GM10248 (cell line): ENCODE measurements at regions of chr12 and their contacts with region 1.

Region 1: GRCh38 chr12:54749191-54749818 is 101.1 kb upstream of the DCD start:
- DNase-seq: peak; percentile 56
- CTCF ChIP-seq: peak; percentile 86

Region 2: GRCh38 chr12:54324617-54325441 is 424.5 kb before region 1 on chr12 and contains the start of gene COPZ1:
- CTCF ChIA-PET with region 1: no interaction called
- POLR2A ChIA-PET with region 1: no interaction called
- DNase-seq: peak; percentile 92
- CTCF ChIP-seq: peak; percentile 72

Region 3: GRCh38 chr12:54701940-54702592 is 47.2 kb before region 1 on chr12:
- CTCF ChIA-PET with region 1: interaction called, 13 read pairs
- POLR2A ChIA-PET with region 1: no interaction called
- DNase-seq: peak; percentile 42
- CTCF ChIP-seq: peak; percentile 51

Region 4: DNA sequence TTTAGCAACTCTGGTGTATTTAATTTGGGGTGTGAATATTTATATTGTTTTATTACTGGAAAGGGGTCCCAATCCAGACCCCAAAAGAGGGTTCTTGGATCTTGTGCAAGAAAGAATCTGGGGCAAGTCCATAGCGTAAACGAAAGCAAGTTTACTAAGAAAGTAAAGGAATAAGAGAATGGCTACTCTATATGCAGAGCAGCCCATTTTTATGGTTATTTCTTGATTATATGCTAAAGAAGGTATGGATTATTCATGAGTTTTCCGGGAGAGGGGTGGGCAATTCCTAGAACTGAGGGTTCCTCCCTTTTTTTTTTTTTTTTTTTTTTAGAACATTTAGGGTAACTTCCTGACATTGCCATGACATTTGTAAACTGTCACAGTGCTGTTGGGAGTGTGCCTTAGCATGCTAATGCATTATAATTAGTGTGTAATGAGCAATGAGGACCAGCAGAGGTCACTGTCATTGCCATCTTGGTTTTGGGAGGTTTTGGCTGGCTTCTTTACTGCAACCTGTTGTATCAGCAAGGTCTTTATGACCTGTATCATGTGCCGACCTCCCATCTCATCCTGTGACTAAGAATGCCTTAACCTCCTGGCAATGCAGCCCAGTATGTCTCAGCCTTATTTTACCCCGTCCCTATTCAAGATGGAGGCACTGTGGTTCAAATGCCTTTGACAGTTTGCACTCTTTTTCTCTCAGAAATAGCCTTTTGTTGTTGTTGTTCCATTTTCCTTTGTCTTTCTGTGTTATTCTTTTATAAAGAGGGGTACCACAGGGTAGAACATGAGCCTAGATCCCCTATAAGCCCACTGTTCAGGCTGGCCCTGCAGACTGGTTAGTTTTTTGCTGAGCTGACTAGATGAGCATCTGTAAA is 25.7 kb before region 1 on chr12:
- CTCF ChIA-PET with region 1: interaction called, 12 read pairs
- POLR2A ChIA-PET with region 1: no interaction called
- DNase-seq: no peak
- CTCF ChIP-seq: peak; percentile 48

Region 5: DNA sequence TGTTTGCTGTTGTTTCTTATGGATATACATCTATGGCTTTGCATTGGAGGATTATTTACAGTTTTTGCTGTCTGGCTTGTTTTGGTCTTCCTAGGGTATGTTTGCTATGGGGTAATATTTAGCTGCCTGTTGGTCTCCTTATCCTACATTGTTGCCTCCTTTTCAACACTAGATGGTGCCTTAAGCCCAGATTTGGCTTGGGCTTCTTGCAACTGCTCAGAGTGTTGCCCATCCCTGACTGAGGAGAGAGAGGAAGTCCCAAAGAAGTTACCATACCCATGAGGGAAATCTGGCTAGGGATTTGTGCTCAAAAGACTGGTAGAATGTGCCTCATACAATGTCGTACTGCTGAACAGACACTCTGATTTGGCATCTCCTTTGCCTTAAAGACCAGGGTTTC is 10.4 kb after region 1 on chr12:
- CTCF ChIA-PET with region 1: interaction called, 28 read pairs
- POLR2A ChIA-PET with region 1: no interaction called
- DNase-seq: peak; percentile 16
- CTCF ChIP-seq: peak; percentile 39

Region 6: DNA sequence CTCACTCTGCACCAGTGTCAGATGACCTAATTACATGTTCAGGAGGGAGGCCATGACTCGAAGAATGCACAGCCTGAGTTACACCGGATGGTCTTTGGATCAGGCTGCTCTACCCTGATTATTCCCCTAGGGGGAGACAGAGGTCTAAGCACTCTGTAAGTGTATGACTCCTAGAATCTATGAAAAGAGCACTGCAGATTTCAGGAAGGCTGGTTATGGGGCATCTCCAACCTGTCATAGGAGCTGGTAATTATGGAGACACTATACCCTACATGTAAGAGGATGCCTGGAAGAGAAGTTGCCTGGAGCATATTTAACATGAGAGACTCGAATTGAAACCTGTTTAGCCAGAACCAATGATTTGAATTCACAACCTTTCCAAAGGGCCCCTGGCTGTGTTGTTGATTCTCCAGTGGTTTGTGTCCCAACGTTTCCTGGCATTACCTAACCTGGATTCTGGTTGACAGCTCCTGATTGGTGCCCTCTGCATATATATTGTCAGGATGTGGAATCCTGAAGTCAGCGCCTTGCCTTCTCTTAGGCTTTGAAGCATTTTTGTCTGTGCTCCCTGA is 104.8 kb after region 1 on chr12 and contains the start of gene MUCL1:
- CTCF ChIA-PET with region 1: interaction called, 13 read pairs
- POLR2A ChIA-PET with region 1: no interaction called
- DNase-seq: peak; percentile 46
- CTCF ChIP-seq: peak; percentile 83

Region 7: GRCh38 chr12:54958048-54958658 is 208.8 kb after region 1 on chr12:
- CTCF ChIA-PET with region 1: interaction called, 62 read pairs
- POLR2A ChIA-PET with region 1: no interaction called
- DNase-seq: peak; percentile 40
- CTCF ChIP-seq: peak; percentile 75

Region 8: GRCh38 chr12:55142669-55143565 is 393.6 kb after region 1 on chr12:
- CTCF ChIA-PET with region 1: interaction called, 14 read pairs
- POLR2A ChIA-PET with region 1: no interaction called
- DNase-seq: peak; percentile 14
- CTCF ChIP-seq: peak; percentile 75